Tibial artery (tissue), 4 donors: ENCODE measurements at regions of chr11 and their contacts with region 1.

Region 1: GRCh38 chr11:33257897-33258630 is 883 bp downstream of the HIPK3 start:
- DNase-seq: peak; percentile 85 to 95
- H3K4me3 ChIP-seq: peak overlapping the region; percentile 88 to 98
- H3K27ac ChIP-seq: peak overlapping the region; percentile 100
- H3K4me1 ChIP-seq: peaks cover 0 to 36% (median 25%) of the 10 kb centered on the region in 4 donors
- H3K27me3 ChIP-seq: no peaks in the 10 kb centered on the region
- CTCF ChIP-seq: peak; percentile 27 to 44

Region 2: GRCh38 chr11:33161120-33162005 is 96.7 kb before region 1 on chr11 and contains the start of gene CSTF3:
- intact Hi-C with region 1: loop called (anchors 2 kb)
- DNase-seq: peak; percentile 100
- H3K4me3 ChIP-seq: peak within 1 kb of the TSS; percentile 78 to 82
- H3K27ac ChIP-seq: peak within 1 kb of the TSS; percentile 75 to 77
- H3K4me1 ChIP-seq: peaks cover 0 to 37% (median 16%) of the 10 kb centered on the region in 4 donors
- H3K27me3 ChIP-seq: no peaks in the 10 kb centered on the region
- CTCF ChIP-seq: peak; percentile 66 to 79

Region 3: DNA sequence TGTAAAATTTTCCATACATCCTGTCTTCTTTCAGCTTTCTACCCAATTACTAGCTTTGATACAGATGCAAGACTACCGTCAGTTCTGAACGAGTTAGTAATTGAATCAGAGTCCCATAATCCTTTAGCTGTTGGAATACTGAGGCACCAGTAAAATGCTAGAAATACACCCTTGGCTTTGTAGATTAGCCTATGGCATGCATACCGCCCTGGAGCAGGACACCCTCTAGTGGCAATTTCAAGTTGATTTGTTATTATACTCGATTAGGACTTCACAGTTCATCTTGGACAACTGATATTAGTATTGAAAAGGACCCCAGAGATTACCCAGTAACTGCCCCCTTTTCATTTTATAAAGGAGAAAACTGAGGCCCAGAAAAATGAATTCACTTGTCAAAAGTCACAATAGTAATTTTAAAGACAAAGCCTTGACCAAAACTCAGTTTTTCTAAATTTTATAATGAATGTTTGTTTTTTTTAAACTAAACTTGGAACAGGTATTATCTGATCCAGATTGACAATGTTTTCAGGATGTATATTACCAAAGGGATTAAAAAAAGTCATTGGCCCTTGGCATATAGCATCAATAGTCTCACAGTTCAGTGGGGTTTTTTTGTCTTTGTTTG is 71.8 kb after region 1 on chr11:
- intact Hi-C with region 1: loop called (anchors 10 kb)
- DNase-seq: no peak
- H3K4me3 ChIP-seq: no peak overlapping the region
- H3K27ac ChIP-seq: no peak overlapping the region
- H3K4me1 ChIP-seq: peaks cover 0 to 52% (median 4%) of the 10 kb centered on the region in 4 donors
- H3K27me3 ChIP-seq: no peaks in the 10 kb centered on the region
- CTCF ChIP-seq: peak; percentile 48 to 61